OCI-LY7 (cell line): ENCODE measurements at regions of chr1 and their contacts with region 1.

Region 1: GRCh38 chr1:32335790-32336590 is at the start of gene MARCKSL1:
- DNase-seq: peak; percentile 85
- H3K4me3 ChIP-seq: peak within 1 kb of the TSS; percentile 85
- H3K27ac ChIP-seq: peak within 1 kb of the TSS; percentile 64
- H3K4me1 ChIP-seq: peaks cover 50% of the 10 kb centered on the region
- CTCF ChIP-seq: no peak
- total RNA-seq, gene MARCKSL1: 120 and 130 TPM in 2 replicates

Region 2: DNA sequence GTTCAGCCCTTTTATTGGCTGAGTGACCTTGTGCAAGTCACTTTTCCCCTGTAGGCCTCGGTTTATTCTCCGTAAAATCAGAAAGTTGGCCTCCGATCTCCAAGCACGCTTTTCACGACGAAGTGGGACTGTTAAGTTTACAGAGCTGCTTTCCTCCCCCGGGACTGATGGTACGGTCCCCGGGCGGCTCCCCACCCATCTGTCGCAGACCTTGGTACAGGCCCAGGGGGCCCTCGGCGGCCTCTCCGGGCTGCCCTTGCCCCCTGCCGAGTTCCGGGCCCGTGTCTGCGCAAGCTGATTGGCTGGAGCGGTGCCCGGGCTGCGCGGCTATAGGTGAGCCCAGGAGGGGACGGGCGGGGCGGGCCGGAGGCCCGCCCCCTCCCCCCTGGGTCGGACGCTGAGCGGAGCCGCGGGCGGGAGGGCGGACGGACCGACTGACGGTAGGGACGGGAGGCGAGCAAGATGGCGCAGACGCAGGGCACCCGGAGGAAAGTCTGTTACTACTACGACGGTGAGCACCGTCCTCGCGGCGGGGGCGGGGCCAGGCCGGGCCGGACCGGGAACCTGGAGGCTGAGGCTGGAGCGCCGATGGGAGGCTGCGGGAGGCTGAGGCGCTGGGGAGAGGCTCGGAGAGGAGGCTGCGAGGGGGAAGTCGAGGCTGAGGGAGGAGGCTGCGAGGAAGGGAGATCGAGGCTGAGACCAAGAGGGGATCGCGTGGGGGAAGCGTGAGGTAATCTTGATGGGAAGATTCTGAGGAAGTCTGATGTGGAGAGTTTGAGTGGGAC is 44.1 kb before region 1 on chr1 and contains the start of gene HDAC1:
- CTCF ChIA-PET with region 1: no interaction called
- POLR2A ChIA-PET with region 1: no interaction called
- intact Hi-C with region 1: loop called (anchors 1 kb)
- DNase-seq: peak; percentile 99
- H3K4me3 ChIP-seq: peak within 1 kb of the TSS; percentile 91
- H3K27ac ChIP-seq: peak within 1 kb of the TSS; percentile 78
- H3K4me1 ChIP-seq: peaks cover 58% of the 10 kb centered on the region
- CTCF ChIP-seq: no peak
- total RNA-seq, gene HDAC1: 259 and 270 TPM in 2 replicates

Region 3: DNA sequence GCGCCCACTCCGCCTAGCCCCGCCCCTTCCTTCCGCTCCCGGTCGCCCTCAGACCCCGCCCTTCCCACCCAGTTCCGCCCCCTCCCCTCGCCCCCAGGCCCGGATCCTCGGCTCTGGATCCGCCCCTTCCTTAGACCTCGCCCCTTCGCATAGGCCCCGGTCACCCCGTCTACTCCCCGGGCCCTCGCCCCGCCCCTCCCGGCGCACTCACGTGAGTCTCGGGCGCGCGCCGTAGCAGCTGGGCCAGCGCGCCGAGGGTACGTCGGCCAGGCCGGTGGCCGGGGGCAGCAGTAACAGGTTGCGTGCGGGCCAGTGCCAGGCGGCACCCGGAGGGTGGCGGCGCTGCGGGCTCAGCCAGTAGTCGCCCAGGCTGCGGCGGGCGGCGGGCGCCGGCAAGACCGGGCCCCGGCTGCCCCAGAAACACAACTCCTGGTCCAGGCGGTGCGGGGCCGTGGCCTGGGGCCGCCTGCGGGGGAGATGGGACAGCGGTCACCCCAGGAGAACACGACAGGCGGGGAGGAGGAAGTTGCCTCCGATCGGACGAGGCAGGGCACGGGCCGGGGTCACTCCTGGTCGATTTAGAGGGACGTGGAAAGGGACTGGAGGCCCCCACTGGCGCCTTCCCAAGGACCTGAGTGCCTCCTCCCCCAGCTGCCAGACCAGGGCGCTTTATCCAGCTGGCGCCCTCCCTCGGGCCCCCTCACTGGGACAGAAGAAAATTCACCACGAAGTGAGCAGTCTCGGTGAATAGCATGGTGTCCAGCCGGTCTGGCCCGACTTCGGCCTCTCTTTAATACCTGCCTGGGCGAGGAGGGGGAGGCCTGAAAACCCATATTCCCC is 15.6 kb after region 1 on chr1:
- CTCF ChIA-PET with region 1: interaction called, 4 read pairs
- POLR2A ChIA-PET with region 1: interaction called, 5 read pairs
- intact Hi-C with region 1: loop called (anchors 1 kb)
- DNase-seq: peak; percentile 96
- H3K4me3 ChIP-seq: peak overlapping the region; percentile 74
- H3K27ac ChIP-seq: peak overlapping the region; percentile 46
- H3K4me1 ChIP-seq: peaks cover 38% of the 10 kb centered on the region
- CTCF ChIP-seq: no peak

Region 4: DNA sequence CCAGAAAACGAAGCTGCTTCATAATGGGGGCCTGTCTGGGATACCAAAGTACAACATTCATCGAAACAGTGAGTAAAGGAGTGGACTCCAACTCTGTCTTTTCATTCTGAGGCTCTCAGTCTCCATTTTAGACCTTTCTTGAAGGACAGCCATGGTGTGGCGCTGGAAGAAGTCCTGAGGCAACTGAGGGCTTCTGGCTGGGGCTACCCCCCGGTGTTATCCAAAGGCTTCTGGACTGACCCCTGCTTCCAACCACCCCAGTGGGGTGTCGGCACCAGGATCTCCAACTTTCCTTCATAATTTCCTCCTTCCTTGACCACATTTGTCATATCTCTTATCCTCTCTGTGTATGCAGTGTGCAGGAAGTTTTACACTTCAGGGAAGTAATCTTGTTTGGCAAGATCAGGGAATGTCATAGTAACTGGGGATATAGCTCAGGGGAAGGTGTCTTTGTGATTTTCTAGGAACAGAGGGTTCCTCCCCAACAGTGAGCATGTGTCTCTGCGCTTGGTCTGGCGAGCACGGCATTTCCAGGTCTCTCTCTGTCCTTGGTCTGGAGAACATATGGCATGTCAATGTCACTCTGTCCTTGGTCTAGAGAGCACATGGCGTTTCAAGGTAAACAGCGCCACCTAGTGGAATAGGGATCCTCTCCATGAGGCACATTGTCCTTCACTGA is 77.7 kb after region 1 on chr1:
- CTCF ChIA-PET with region 1: no interaction called
- POLR2A ChIA-PET with region 1: no interaction called
- intact Hi-C with region 1: loop called (anchors 5 kb)
- DNase-seq: peak; percentile 91
- H3K4me3 ChIP-seq: no peak overlapping the region
- H3K27ac ChIP-seq: no peak overlapping the region
- H3K4me1 ChIP-seq: peaks cover 5% of the 10 kb centered on the region
- CTCF ChIP-seq: peak; percentile 95